ENCODE measurements at regions of chr16 and their contacts with region 1.

Region 1: GRCh38 chr16:19113453-19114351 is at the start of gene ITPRIPL2:
- DNase-seq: peak in 1 of 2 experiments; percentile 74
- H3K4me3 ChIP-seq: peak within 1 kb of the TSS; percentile 42 to 68 (median 45)
- H3K27ac ChIP-seq: no peak within 1 kb of the TSS
- H3K4me1 ChIP-seq: peaks cover 5 to 12% (median 7%) of the 10 kb centered on the region in 4 experiments
- H3K27me3 ChIP-seq: peaks cover 14 to 30% (median 28%) of the 10 kb centered on the region in 4 experiments
- CTCF ChIP-seq: no peak
- EP300 ChIP-seq: no peak
- POLR2A ChIP-seq: no peak
- RAD21 ChIP-seq: no peak
- total RNA-seq, gene ITPRIPL2: 3.3 and 3.4 TPM in 2 replicates

Region 2: GRCh38 chr16:19127674-19128131 is 14.0 kb after region 1 on chr16:
- CTCF ChIA-PET with region 1: interaction called, 10 read pairs
- POLR2A ChIA-PET with region 1: interaction called, 8 read pairs
- DNase-seq: no peak
- H3K4me3 ChIP-seq: no peak overlapping the region
- H3K27ac ChIP-seq: no peak overlapping the region
- H3K4me1 ChIP-seq: peaks cover 0 to 11% (median 4%) of the 10 kb centered on the region in 4 experiments; a peak in 5 of 7 replicates
- H3K27me3 ChIP-seq: no peaks in the 10 kb centered on the region
- CTCF ChIP-seq: no peak
- EP300 ChIP-seq: no peak
- POLR2A ChIP-seq: no peak
- RAD21 ChIP-seq: no peak